ENCODE measurements at regions of chr1 and their contacts with region 1.

Region 1: DNA sequence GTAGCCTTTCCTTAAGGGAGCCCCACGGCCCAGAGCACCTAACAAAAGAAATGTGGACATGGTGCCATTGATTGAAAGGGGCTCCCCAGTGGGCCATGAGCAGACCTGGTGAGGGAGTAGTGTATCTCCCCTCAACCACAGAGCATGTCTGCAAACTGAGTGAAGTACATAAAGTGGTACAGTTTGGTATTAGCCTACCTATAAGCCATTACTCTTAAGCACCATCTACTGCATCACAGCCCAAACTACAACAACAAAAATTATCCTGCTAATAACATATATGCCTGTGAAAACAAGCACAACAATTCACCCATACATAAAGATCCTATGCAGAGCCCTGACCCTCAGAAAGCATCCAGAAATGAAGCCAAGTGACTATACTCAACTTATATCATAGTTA is 407.8 kb downstream of the PTPRC start:
- DNase-seq: no peak
- H3K4me3 ChIP-seq: no peak overlapping the region
- H3K27ac ChIP-seq: no peak overlapping the region
- H3K4me1 ChIP-seq: no peaks in the 10 kb centered on the region
- H3K27me3 ChIP-seq: peaks cover 1% of the 10 kb centered on the region
- CTCF ChIP-seq: peak; percentile 16 to 47

Region 2: DNA sequence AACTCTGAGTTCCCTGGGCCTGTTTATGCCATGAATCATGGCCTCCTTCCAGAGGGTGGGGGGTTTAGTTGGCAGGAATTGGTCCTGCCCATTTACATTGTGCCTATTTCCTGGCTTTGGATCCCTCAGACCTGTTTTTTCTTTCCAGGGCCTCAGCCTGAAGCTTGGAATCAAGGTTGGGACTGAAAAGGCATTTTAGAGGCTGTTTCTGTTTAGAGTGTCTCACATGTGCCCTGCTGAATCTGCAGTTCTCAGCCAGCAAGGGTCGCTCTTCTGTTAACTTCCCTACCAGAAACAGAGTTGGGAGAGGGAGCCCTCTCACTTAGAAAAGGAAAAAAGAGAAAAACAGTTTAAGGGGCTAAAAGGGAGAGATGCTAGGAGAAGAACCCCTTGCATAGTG is 216.7 kb before region 1 on chr1:
- CTCF ChIA-PET with region 1: no interaction called
- dilution Hi-C with region 1: no loop called
- in situ Hi-C with region 1: no loop called
- intact Hi-C with region 1: loop called (anchors 5 kb)
- DNase-seq: no peak
- H3K4me3 ChIP-seq: no peak overlapping the region
- H3K27ac ChIP-seq: no peak overlapping the region
- H3K4me1 ChIP-seq: no peaks in the 10 kb centered on the region
- H3K27me3 ChIP-seq: no peaks in the 10 kb centered on the region
- CTCF ChIP-seq: peak in 1 of 2 donors; percentile 1

Region 3: DNA sequence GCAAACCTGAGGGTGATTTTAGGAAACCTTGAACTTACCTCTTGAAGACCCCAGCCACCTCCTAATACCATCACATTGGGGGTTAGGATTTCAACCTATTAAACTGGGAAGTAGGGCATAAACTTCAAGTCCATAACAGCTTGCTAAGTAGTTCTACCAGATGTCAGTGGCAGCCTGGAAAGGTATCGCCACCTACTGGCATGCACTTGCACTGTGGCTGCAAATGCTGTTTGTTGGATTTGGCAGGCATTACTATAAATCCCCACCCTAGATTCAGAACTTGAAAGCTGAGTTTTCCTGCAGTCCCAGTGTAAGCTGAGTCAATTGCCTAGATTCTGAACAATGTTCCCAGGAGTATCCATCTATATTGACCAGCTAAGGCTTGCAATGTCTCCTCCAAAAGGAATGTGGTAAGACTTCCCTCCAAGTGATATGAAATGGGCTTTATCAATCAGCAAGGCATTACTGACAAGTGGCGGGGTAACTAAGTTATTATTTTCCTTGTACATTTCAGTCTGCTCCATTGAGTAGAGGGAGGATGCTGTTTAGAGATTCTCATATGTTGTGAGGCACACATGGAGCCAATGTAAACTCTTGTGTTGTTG is 66.7 kb after region 1 on chr1:
- CTCF ChIA-PET with region 1: no interaction called
- dilution Hi-C with region 1: no loop called
- in situ Hi-C with region 1: no loop called
- intact Hi-C with region 1: no loop called
- DNase-seq: peak; percentile 39
- H3K4me3 ChIP-seq: no peak overlapping the region
- H3K27ac ChIP-seq: no peak overlapping the region
- H3K4me1 ChIP-seq: no peaks in the 10 kb centered on the region
- H3K27me3 ChIP-seq: no peaks in the 10 kb centered on the region
- CTCF ChIP-seq: peak; percentile 89 to 97